ENCODE measurements at regions of chr7 and their contacts with region 1.

Region 1: GRCh38 chr7:100469227-100470044 is 5.4 kb upstream of the SPACDR start:
- H3K4me3 ChIP-seq: no peak overlapping the region
- H3K27ac ChIP-seq: no peak overlapping the region
- H3K4me1 ChIP-seq: peaks cover 3% of the 10 kb centered on the region; the same call in 1 of the 2 replicates
- CTCF ChIP-seq: peak; percentile 93

Region 2: GRCh38 chr7:100456558-100456957 is 12.9 kb before region 1 on chr7:
- CTCF ChIA-PET with region 1: interaction called, 24 read pairs
- POLR2A ChIA-PET with region 1: interaction called, 4 read pairs
- H3K4me3 ChIP-seq: no peak overlapping the region
- H3K27ac ChIP-seq: no peak overlapping the region
- H3K4me1 ChIP-seq: no peaks in the 10 kb centered on the region
- CTCF ChIP-seq: no peak

Region 3: DNA sequence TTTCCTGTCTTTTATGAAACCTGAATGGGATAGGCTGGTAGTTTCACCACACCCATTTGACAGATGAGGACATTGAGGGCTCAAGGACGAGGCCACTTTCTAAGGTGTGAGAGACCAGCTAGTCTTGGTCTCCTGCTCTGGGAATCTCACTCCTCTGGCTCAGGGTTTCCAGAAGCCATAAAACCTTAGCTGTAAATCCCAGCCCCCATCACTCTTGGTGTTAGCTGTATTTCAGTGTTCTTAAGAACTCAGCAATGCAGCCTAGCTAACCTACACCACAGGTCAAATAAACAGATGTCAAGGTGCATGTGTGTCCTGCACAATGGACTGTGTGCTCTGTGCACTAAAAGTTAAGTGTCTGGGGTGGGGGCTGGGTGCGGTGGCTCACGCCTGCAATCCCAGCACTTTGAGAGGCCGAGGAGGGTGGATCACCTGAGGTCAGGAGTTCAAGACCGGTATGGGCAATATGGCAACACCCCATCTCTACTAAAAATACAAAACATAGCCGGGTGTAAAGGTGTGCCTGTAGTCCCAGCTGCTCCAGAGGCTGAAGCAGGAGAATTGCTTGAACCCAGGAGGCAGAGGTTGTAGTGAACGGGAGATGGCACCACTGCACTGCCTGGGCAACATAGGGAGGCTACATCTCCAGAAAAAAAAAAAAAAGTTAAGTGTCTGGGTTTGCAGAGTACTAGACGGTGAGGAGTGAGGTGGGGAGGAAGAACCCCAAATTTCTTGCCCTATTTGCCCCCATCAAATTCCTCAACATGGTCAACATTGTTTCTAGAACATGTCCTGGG is 250.3 kb after region 1 on chr7:
- CTCF ChIA-PET with region 1: interaction called, 10 read pairs
- POLR2A ChIA-PET with region 1: no interaction called
- H3K4me3 ChIP-seq: no peak overlapping the region
- H3K27ac ChIP-seq: no peak overlapping the region
- H3K4me1 ChIP-seq: no peaks in the 10 kb centered on the region
- CTCF ChIP-seq: no peak

Measured in HEK293 (cell line).